ENCODE measurements at regions of chr2 and their contacts with region 1.

Region 1: DNA sequence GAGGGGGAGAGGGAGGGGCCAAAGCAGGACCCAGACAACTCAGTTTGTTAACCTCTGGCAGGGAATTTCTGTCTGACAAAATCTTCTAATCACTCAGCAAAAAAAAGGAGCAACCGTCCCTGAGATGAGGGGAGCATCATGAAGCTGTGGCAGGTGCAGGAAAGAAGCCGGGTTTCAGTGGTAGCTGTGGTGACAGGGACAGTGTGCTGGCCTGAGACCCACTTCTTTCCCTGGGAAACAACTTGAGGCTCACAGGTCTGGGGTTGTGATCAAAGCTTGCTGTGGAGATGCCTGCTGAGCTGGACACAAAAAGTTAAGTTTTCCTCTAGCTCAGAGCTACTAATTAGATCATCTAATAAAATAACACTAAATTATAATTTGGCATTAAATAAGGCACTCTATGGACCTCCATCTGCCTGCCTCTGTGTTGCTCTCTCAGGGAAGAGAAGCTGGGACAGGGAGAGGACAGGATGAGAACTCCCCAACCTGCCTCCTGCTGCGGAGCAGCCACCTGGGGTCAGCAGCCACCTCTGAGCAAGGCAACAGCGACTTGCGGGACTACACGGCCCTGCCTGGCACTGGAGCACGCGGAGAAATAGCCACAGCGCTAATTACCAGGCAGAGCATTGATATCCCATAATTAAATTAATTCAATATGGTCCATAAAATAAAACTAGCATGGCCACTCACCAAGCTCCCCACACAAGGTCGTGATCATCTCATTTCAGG is 104.6 kb upstream of the TEX51 start:
- DNase-seq: peak in 1 of 2 experiments; percentile 42
- H3K4me3 ChIP-seq: no peak overlapping the region
- H3K4me3 Mint-ChIP-seq: no peak overlapping the region
- H3K27ac Mint-ChIP-seq: no peak overlapping the region
- H3K4me1 ChIP-seq: no peaks in the 10 kb centered on the region
- H3K4me1 Mint-ChIP-seq: no peaks in the 10 kb centered on the region
- H3K27me3 ChIP-seq: no peaks in the 10 kb centered on the region
- H3K27me3 Mint-ChIP-seq: peaks cover 19% of the 10 kb centered on the region
- CTCF ChIP-seq: no peak

Region 2: GRCh38 chr2:126749537-126749936 is 44.5 kb before region 1 on chr2:
- CTCF ChIA-PET with region 1: no interaction called
- POLR2A ChIA-PET with region 1: no interaction called
- intact Hi-C with region 1: no loop called
- DNase-seq: peak in 1 of 2 experiments; percentile 11
- H3K4me3 ChIP-seq: no peak overlapping the region
- H3K4me3 Mint-ChIP-seq: no peak overlapping the region
- H3K27ac Mint-ChIP-seq: no peak overlapping the region
- H3K4me1 ChIP-seq: no peaks in the 10 kb centered on the region
- H3K4me1 Mint-ChIP-seq: no peaks in the 10 kb centered on the region
- H3K27me3 ChIP-seq: no peaks in the 10 kb centered on the region; the same call in 1 of the 2 replicates
- H3K27me3 Mint-ChIP-seq: peaks cover 14% of the 10 kb centered on the region
- CTCF ChIP-seq: peak in 1 of 2 experiments; percentile 2

Region 3: GRCh38 chr2:127003070-127003800 is 209.2 kb after region 1 on chr2:
- CTCF ChIA-PET with region 1: interaction called, 5 read pairs
- POLR2A ChIA-PET with region 1: no interaction called
- intact Hi-C with region 1: loop called (anchors 1 kb)
- DNase-seq: peak; percentile 68 to 84
- H3K4me3 ChIP-seq: no peak overlapping the region
- H3K4me3 Mint-ChIP-seq: peak overlapping the region; percentile 1
- H3K27ac Mint-ChIP-seq: peak overlapping the region; percentile 6
- H3K4me1 ChIP-seq: peaks cover 26% of the 10 kb centered on the region
- H3K4me1 Mint-ChIP-seq: peaks cover 19% of the 10 kb centered on the region
- H3K27me3 ChIP-seq: no peaks in the 10 kb centered on the region
- H3K27me3 Mint-ChIP-seq: no peaks in the 10 kb centered on the region
- CTCF ChIP-seq: peak; percentile 22 to 62

Region 4: DNA sequence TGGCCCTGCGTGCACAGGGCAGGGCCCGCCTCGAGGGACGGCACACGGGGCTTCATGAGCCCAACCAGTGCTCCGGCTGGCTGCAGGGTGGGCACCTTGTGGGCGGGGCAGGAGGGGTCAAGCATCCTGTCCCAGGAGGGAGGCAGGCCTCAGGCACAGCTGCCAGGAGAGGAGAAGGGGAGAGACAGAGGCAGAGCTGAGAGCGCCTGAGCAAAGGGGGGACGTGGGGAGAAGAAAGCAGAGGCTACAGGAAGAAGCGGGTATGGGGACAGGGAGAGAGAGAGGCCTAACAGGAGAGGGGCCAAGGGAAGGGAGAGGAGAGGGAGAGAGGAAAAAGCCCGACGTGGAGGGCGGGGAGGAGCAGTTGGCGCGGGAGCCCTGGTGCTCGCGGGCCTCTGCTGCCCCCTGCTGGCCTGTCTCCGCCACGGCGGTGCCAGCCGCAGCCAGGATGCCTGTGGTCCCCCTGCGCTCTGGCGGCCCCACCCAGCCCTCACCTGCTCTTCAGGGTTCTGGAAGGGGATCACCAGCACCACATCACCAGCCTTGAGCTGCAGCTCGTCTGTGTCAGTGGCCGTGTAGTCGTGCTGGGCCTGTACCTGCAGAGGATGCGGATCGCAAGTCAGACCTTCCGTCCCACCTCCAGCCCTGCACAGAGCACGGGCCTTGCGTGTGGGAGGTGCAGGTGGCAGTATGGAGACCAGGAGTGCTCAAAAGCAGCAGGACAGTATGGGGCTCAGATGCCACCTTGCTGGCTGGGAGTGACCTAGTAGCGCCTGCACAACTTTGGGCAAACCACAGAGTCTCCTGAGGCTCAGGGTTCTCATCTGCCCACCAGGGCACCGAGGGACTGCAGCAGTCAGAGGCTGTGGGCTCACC is 256.1 kb after region 1 on chr2:
- CTCF ChIA-PET with region 1: no interaction called
- POLR2A ChIA-PET with region 1: no interaction called
- intact Hi-C with region 1: loop called (anchors 1 kb)
- DNase-seq: peak; percentile 46 to 77
- H3K4me3 ChIP-seq: no peak overlapping the region
- H3K4me3 Mint-ChIP-seq: no peak overlapping the region
- H3K27ac Mint-ChIP-seq: no peak overlapping the region
- H3K4me1 ChIP-seq: peaks cover 9% of the 10 kb centered on the region; the same call in 1 of the 2 replicates
- H3K4me1 Mint-ChIP-seq: peaks cover 14% of the 10 kb centered on the region
- H3K27me3 ChIP-seq: no peaks in the 10 kb centered on the region
- H3K27me3 Mint-ChIP-seq: no peaks in the 10 kb centered on the region
- CTCF ChIP-seq: peak; percentile 87 to 97